GM12878 (cell line): ENCODE measurements at regions of chrX and their contacts with region 1.

Region 1: GRCh38 chrX:76148753-76149152 is 24.1 kb upstream of the PBDC1 start:
- DNase-seq: peak; percentile 45
- ATAC-seq: peak; percentile 30
- H3K4me3 ChIP-seq: peak overlapping the region; percentile 31
- H3K27ac ChIP-seq: peak overlapping the region; percentile 84
- H3K4me1 ChIP-seq: peaks cover 6% of the 10 kb centered on the region
- H3K27me3 ChIP-seq: no peaks in the 10 kb centered on the region
- CTCF ChIP-seq: no peak
- EP300 ChIP-seq: no peak
- POLR2A ChIP-seq: no peak
- RAD21 ChIP-seq: no peak

Region 2: GRCh38 chrX:75038925-75039324 is 1109.8 kb before region 1 on chrX:
- CTCF ChIA-PET with region 1: no interaction called
- POLR2A ChIA-PET with region 1: no interaction called
- RAD21 ChIA-PET with region 1: no interaction called
- SMC1A ChIA-PET with region 1: no interaction called
- in situ Hi-C with region 1: loop called (anchors 25 kb)
- intact Hi-C with region 1: loop called (anchors 5 kb)
- DNase-seq: peak; percentile 11
- ATAC-seq: peak; percentile 83
- H3K4me3 ChIP-seq: no peak overlapping the region
- H3K27ac ChIP-seq: no peak overlapping the region
- H3K4me1 ChIP-seq: no peaks in the 10 kb centered on the region
- H3K27me3 ChIP-seq: no peaks in the 10 kb centered on the region
- CTCF ChIP-seq: peak; percentile 40 to 57 (median 42); a peak in 5 of 6 replicates
- EP300 ChIP-seq: no peak
- POLR2A ChIP-seq: no peak
- RAD21 ChIP-seq: peak; percentile 63

Region 3: DNA sequence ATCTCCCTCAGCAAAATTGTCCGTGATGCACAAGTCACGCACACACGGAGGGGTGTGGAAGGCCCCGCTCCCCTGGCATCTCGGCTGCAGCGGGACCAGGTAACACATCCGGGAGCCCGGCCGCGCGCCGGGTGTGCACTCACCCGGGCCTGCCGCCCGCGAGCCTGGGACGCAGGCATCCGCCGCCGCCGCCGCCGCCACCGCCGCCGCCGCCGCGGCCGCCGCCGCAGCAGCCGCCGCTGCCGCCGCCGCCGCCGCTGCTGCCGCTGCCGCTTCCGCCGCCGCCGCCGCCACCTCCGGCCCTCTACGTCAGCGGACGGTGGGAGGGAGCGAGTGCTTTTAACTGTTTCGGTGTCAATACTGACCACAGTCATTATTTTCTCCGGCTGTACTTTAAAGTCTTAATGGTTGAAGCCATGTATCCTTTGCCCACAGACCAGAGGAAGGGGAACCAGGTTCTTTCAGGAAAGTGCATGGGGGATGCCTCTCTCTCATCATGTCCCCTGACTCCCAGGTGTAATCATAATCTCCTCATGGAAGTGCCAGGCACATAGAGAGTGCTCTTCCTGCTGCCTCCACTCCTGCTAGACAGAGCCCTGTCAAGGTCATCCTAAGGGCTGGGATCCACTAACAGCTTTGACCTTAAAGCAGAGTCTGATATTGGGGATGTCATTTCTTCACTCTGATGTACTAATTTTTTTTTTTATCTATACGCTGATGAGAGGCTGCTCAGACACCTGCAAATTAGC is 401.7 kb before region 1 on chrX:
- CTCF ChIA-PET with region 1: no interaction called
- POLR2A ChIA-PET with region 1: no interaction called
- RAD21 ChIA-PET with region 1: no interaction called
- SMC1A ChIA-PET with region 1: no interaction called
- in situ Hi-C with region 1: no loop called
- intact Hi-C with region 1: no loop called
- DNase-seq: no peak
- ATAC-seq: peak; percentile 69
- H3K4me3 ChIP-seq: peak overlapping the region; percentile 27; the same call in 1 of the 2 replicates
- H3K27ac ChIP-seq: no peak overlapping the region
- H3K4me1 ChIP-seq: no peaks in the 10 kb centered on the region
- H3K27me3 ChIP-seq: no peaks in the 10 kb centered on the region
- CTCF ChIP-seq: no peak
- EP300 ChIP-seq: no peak
- POLR2A ChIP-seq: no peak
- RAD21 ChIP-seq: no peak

Region 4: DNA sequence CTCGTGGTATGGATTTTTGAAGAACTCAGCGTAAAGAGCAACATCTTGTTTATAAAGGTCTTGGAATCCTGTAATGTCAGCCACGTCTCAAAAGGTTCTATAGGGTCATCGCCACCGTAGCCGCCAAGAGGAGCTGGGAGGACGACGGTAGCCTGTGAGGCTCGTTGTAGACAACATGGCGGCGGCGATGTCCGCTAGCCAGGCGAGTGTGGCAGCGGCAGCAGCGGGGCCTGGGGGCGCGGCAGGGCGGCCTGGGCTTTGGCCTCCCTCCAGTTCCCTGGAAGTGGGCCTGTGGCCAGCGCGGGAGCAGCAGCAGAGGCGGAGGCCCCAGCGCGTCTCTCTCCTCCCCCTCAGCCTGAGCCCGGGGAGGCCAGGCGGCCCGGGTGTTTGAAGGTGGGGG is 119.4 kb before region 1 on chrX:
- CTCF ChIA-PET with region 1: no interaction called
- POLR2A ChIA-PET with region 1: no interaction called
- RAD21 ChIA-PET with region 1: no interaction called
- SMC1A ChIA-PET with region 1: no interaction called
- in situ Hi-C with region 1: no loop called
- intact Hi-C with region 1: no loop called
- DNase-seq: no peak
- ATAC-seq: no peak
- H3K4me3 ChIP-seq: no peak overlapping the region
- H3K27ac ChIP-seq: no peak overlapping the region
- H3K4me1 ChIP-seq: no peaks in the 10 kb centered on the region
- H3K27me3 ChIP-seq: no peaks in the 10 kb centered on the region
- CTCF ChIP-seq: no peak
- EP300 ChIP-seq: no peak
- POLR2A ChIP-seq: no peak
- RAD21 ChIP-seq: no peak

Region 5: DNA sequence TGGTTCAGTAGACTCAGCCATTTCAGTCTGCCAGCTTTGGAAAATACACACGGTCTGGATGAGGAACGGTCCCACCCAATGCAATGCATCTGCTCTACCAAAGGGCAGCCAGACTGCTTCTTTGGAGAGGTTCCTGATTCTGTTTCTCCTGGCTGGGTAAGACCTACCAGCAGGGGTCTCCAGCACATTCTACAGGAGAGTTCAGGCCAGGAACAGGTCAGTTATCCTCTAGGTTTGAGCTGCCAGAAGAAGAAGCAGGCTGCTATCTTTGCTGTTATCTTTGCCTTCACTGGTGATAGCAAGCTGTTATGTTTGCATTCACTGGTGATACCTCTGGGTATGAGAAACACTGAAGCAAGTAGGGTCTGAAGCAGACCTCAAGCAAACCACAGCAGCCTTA is 21.4 kb before region 1 on chrX:
- CTCF ChIA-PET with region 1: no interaction called
- POLR2A ChIA-PET with region 1: no interaction called
- RAD21 ChIA-PET with region 1: no interaction called
- SMC1A ChIA-PET with region 1: no interaction called
- in situ Hi-C with region 1: no loop called
- intact Hi-C with region 1: no loop called
- DNase-seq: no peak
- ATAC-seq: 0 out of 3 replicates have a peak, but pooled peaks have one; percentile 18
- H3K4me3 ChIP-seq: no peak overlapping the region
- H3K27ac ChIP-seq: no peak overlapping the region
- H3K4me1 ChIP-seq: no peaks in the 10 kb centered on the region
- H3K27me3 ChIP-seq: no peaks in the 10 kb centered on the region
- CTCF ChIP-seq: peak in 2 of 3 experiments; percentile 4 to 34; a peak in 1 of 6 replicates
- EP300 ChIP-seq: no peak
- POLR2A ChIP-seq: no peak
- RAD21 ChIP-seq: no peak

Region 6: DNA sequence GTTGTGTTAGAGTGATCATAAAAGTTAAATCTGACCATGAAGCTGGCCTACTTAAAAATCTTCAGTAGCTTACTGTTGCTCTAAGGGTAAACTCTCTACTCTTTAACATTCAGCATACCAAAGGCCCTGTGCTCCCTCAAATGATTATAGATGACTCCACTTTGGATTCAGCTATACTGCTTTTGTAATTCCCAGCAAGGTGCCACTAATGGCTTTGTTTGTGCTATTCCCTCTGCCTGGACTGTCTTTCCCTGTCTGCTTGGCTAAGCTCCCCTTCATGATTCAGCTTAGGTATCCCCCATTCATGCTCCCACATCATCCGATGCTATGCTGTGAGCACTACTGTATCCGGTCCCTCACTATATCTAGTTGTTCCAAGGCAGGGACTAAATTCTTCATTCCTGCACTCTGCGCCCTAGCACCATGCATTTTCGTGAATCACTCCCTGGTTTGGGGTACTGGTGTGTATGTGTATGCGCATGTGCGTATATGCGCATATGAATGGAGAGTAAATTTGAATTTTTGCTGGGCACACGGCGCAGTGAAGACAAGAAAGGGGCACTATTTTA is 23.7 kb after region 1 on chrX:
- CTCF ChIA-PET with region 1: interaction called, 4 read pairs
- POLR2A ChIA-PET with region 1: interaction called, 5 read pairs
- RAD21 ChIA-PET with region 1: interaction called, 15 read pairs
- SMC1A ChIA-PET with region 1: interaction called, 6 read pairs
- in situ Hi-C with region 1: no loop called
- intact Hi-C with region 1: no loop called
- DNase-seq: no peak
- ATAC-seq: peak; percentile 60; the same call in 2 of the 3 replicates
- H3K4me3 ChIP-seq: peak overlapping the region; percentile 70; the same call in 1 of the 2 replicates
- H3K27ac ChIP-seq: peak overlapping the region; percentile 38
- H3K4me1 ChIP-seq: no peaks in the 10 kb centered on the region
- H3K27me3 ChIP-seq: no peaks in the 10 kb centered on the region
- CTCF ChIP-seq: no peak
- EP300 ChIP-seq: no peak
- POLR2A ChIP-seq: no peak
- RAD21 ChIP-seq: no peak

Region 7: DNA sequence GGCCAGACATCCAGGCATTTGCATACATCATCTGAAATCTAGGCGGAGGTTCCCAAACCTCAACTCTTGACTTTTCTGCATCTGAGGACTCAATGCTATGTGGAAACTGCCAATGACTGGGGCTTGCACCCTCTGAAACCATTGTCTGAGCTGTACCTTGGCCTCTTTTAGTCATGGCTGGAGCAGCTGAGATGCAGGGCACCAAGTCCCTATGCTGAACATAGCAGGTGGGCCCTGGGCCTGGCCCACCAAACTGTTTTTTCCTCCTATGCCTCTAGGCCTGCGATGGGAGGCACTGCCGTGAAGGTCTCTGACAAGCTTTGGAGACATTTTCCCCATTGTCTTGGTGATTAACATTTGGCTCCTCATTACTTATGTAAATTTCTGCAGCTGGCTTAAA is 46.8 kb after region 1 on chrX:
- CTCF ChIA-PET with region 1: no interaction called
- POLR2A ChIA-PET with region 1: no interaction called
- RAD21 ChIA-PET with region 1: no interaction called
- SMC1A ChIA-PET with region 1: no interaction called
- in situ Hi-C with region 1: no loop called
- intact Hi-C with region 1: no loop called
- DNase-seq: no peak
- ATAC-seq: no peak
- H3K4me3 ChIP-seq: no peak overlapping the region
- H3K27ac ChIP-seq: no peak overlapping the region
- H3K4me1 ChIP-seq: no peaks in the 10 kb centered on the region
- H3K27me3 ChIP-seq: no peaks in the 10 kb centered on the region
- CTCF ChIP-seq: no peak
- EP300 ChIP-seq: no peak
- POLR2A ChIP-seq: no peak
- RAD21 ChIP-seq: no peak